ENCODE measurements at regions of chr6 and their contacts with region 1.

Region 1: GRCh38 chr6:138957484-138957883 is 30.6 kb downstream of the REPS1 start:
- DNase-seq: no peak
- H3K4me3 ChIP-seq: no peak overlapping the region
- H3K27ac ChIP-seq: peak overlapping the region; percentile 15 to 67 (median 62)
- H3K4me1 ChIP-seq: peaks cover 10 to 46% (median 23%) of the 10 kb centered on the region in 4 donors
- H3K27me3 ChIP-seq: no peaks in the 10 kb centered on the region
- CTCF ChIP-seq: no peak
- EP300 ChIP-seq: no peak
- POLR2A ChIP-seq: no peak

Region 2: GRCh38 chr6:138987640-138988468 is 30.4 kb after region 1 on chr6 and contains the start of gene REPS1:
- in situ Hi-C with region 1: no loop called
- intact Hi-C with region 1: loop called (anchors 1 kb)
- DNase-seq: peak; percentile 93
- H3K4me3 ChIP-seq: peak within 1 kb of the TSS; percentile 79 to 94 (median 86)
- H3K27ac ChIP-seq: peak within 1 kb of the TSS; percentile 89 to 97 (median 90)
- H3K4me1 ChIP-seq: peaks cover 7 to 46% (median 24%) of the 10 kb centered on the region in 4 donors
- H3K27me3 ChIP-seq: no peaks in the 10 kb centered on the region
- CTCF ChIP-seq: peak; percentile 98 to 100 (median 99)
- EP300 ChIP-seq: no peak
- POLR2A ChIP-seq: peak; percentile 90
- total RNA-seq, gene REPS1: 33.5 to 74.4 (median 48.6) TPM